Esophagus muscularis mucosa (tissue), 4 donors: ENCODE measurements at regions of chr6 and their contacts with region 1.

Region 1: GRCh38 chr6:4055420-4056041 is 23.4 kb downstream of the FAM217A start:
- DNase-seq: no peak
- H3K4me3 ChIP-seq: no peak overlapping the region
- H3K27ac ChIP-seq: peak overlapping the region in 1 of 4 donors; percentile 4
- H3K4me1 ChIP-seq: peaks cover 7 to 12% (median 9%) of the 10 kb centered on the region in 4 donors
- H3K27me3 ChIP-seq: no peaks in the 10 kb centered on the region
- CTCF ChIP-seq: peak; percentile 27 to 43 (median 43)
- EP300 ChIP-seq: no peak
- POLR2A ChIP-seq: no peak

Region 2: GRCh38 chr6:4155848-4156466 is 100.4 kb after region 1 on chr6:
- intact Hi-C with region 1: loop called (anchors 2 kb)
- DNase-seq: peak; percentile 93
- H3K4me3 ChIP-seq: no peak overlapping the region
- H3K27ac ChIP-seq: no peak overlapping the region
- H3K4me1 ChIP-seq: peaks cover 2 to 6% (median 3%) of the 10 kb centered on the region in 4 donors
- H3K27me3 ChIP-seq: no peaks in the 10 kb centered on the region
- CTCF ChIP-seq: peak; percentile 84 to 89 (median 86)
- EP300 ChIP-seq: no peak
- POLR2A ChIP-seq: no peak

Region 3: DNA sequence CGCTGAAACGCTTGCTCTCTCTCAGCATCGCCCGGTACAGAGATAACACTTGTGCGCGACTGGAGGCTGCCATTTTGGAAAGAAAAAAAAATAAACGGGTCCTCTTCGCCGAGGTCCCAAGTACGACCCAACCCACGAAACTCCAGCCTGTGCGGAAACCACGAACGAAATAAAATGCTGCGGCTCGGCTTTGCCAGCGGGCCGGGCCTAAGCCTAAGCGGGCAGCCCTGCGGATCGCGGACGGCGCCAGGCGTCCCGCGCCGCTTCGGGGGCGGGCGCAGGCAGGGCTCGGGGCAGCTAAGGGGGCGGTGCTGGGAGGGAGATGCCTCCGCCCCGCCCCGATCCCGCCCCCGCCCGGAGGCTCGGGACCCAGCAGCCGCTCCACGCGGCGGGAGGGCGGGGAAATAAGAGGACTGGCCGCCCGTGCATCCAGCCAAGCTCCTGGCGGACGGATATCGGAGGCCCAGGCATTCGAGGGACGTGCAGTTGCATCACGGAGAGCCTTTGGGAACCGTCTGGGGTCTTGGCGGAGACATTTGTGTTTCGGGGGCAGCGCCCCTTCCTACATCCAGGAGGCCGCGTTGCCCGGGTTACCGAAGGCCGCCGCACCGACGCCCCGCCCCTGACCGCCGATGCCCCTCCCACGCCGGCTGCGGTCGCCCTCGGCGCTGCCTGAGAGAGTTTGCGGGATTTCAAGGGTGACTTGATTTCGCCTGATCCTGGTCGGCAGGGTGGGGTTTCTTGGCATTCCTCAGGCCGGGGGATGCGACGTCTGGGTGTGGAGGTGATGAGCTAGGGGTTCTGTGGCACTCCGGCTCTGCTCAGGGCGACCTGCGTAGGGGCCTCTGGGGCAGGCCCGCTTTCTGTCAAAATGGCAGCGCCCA is 1205.4 kb after region 1 on chr6 and contains the starts of genes FARS2 and LYRM4:
- intact Hi-C with region 1: no loop called
- DNase-seq: peak; percentile 97
- H3K4me3 ChIP-seq: peak within 1 kb of the TSS; percentile 72 to 82 (median 75)
- H3K27ac ChIP-seq: peak within 1 kb of the TSS; percentile 89 to 94 (median 92)
- H3K4me1 ChIP-seq: peaks cover 17 to 26% (median 24%) of the 10 kb centered on the region in 4 donors
- H3K27me3 ChIP-seq: no peaks in the 10 kb centered on the region
- CTCF ChIP-seq: peak in 1 of 3 experiments; percentile 49
- EP300 ChIP-seq: no peak
- POLR2A ChIP-seq: no peak
- total RNA-seq, gene FARS2: 10.6 to 24.9 (median 15.2) TPM
- total RNA-seq, gene LYRM4: 16.9 to 20.9 (median 18.4) TPM